Activated naive CD4-positive, alpha-beta T cell treated with anti-CD3 and anti-CD28 coated beads, Interleukin-2, amount 10 ng/mL, durations not matched to agents 7 days and 5 days (primary cell): ENCODE measurements at regions of chr1 and their contacts with region 1.

Region 1: DNA sequence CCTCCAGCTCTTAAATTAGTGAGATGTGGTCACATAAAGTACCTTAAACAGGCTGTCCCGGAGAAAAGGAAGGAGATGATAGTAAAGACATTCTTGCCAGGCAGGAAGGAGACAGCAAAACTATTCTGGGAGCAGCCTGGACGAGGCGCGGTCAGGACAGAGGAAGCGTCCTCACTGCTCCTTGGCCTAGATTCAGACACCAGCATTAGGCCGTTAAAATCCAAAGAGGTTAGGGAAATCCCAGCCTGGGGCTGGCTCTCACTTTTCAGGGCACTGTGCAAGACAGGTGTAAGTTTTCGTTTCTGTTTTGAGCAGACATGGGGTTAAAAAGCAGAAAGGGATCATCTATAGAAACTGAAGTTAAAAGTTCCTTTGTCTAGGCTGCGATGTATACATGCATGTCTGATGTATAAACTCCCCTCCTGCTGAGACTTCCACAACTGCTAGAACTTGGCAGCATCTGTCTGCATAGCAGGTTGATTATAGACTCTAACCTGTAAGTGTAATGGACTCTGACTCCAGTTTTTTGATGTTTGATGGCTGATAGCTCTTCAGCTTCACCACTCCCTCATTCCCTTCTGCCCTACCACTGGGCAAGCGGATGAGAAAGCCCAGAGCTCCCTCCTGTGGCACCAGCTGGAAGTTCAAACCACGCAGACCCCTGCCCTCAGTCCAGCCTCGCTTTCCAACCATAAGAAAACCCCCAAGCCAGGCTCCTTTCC is 21.5 kb downstream of the STPG1 start:
- DNase-seq: peak; percentile 74
- H3K4me3 Mint-ChIP-seq: peak overlapping the region; percentile 62
- H3K27ac Mint-ChIP-seq: peak overlapping the region; percentile 91
- H3K4me1 Mint-ChIP-seq: peaks cover 36% of the 10 kb centered on the region
- H3K27me3 Mint-ChIP-seq: no peaks in the 10 kb centered on the region

Region 2: GRCh38 chr1:24150234-24151174 is 241.5 kb before region 1 on chr1:
- CTCF ChIA-PET with region 1: interaction called, 79 read pairs
- DNase-seq: peak; percentile 93
- H3K4me3 Mint-ChIP-seq: peak overlapping the region; percentile 10
- H3K27ac Mint-ChIP-seq: no peak overlapping the region
- H3K4me1 Mint-ChIP-seq: peaks cover 19% of the 10 kb centered on the region
- H3K27me3 Mint-ChIP-seq: peaks cover 65% of the 10 kb centered on the region

Region 3: DNA sequence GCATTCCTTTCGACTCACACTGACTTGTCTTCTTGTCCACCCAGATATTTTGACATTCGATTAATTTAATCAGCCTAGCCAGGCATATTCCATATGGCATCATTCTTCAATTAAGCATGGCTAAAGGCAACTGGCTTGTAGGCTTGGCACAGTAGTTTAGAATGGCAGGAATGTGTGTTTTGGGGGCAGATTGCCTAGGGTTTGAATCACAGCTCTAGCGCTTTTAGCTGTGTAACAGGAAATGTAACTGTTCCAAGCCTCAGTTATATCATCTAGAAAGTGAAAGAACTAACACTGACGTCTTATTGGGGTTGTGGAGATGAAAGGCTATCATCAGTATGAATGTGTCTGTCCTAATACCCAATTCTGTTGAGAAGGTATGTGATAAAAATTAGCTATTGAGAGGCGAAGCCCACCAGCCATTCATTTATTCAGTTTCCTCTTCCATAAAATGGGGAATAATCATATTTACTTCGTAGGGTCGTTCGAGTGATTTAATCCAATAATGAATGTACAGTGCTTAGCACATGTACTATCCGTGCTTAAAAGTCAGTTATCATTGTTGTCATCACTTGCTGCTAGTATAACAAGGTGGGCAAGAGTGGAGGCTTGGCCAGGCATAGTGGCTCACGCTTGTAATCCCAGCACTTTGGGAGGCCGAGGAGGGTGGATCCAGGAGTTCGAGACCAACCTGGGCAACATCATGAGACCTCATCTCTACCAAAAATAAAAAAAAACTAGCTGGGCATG is 114.4 kb before region 1 on chr1:
- CTCF ChIA-PET with region 1: interaction called, 20 read pairs
- DNase-seq: no peak
- H3K4me3 Mint-ChIP-seq: no peak overlapping the region
- H3K27ac Mint-ChIP-seq: no peak overlapping the region
- H3K4me1 Mint-ChIP-seq: peaks cover 14% of the 10 kb centered on the region
- H3K27me3 Mint-ChIP-seq: peaks cover 46% of the 10 kb centered on the region

Region 4: GRCh38 chr1:24321697-24322469 is 70.2 kb before region 1 on chr1:
- CTCF ChIA-PET with region 1: interaction called, 16 read pairs
- DNase-seq: peak; percentile 85
- H3K4me3 Mint-ChIP-seq: peak overlapping the region; percentile 69
- H3K27ac Mint-ChIP-seq: peak overlapping the region; percentile 75
- H3K4me1 Mint-ChIP-seq: peaks cover 48% of the 10 kb centered on the region
- H3K27me3 Mint-ChIP-seq: peaks cover 100% of the 10 kb centered on the region

Region 5: GRCh38 chr1:24351918-24352627 is 40.0 kb before region 1 on chr1:
- CTCF ChIA-PET with region 1: interaction called, 16 read pairs
- DNase-seq: no peak
- H3K4me3 Mint-ChIP-seq: no peak overlapping the region
- H3K27ac Mint-ChIP-seq: no peak overlapping the region
- H3K4me1 Mint-ChIP-seq: peaks cover 26% of the 10 kb centered on the region
- H3K27me3 Mint-ChIP-seq: peaks cover 24% of the 10 kb centered on the region

Region 6: GRCh38 chr1:24459551-24460266 is 67.7 kb after region 1 on chr1:
- CTCF ChIA-PET with region 1: no interaction called
- DNase-seq: no peak
- H3K4me3 Mint-ChIP-seq: no peak overlapping the region
- H3K27ac Mint-ChIP-seq: no peak overlapping the region
- H3K4me1 Mint-ChIP-seq: peaks cover 6% of the 10 kb centered on the region
- H3K27me3 Mint-ChIP-seq: no peaks in the 10 kb centered on the region

Region 7: GRCh38 chr1:24586970-24587820 is 195.2 kb after region 1 on chr1:
- CTCF ChIA-PET with region 1: interaction called, 33 read pairs
- DNase-seq: peak; percentile 64
- H3K4me3 Mint-ChIP-seq: no peak overlapping the region
- H3K27ac Mint-ChIP-seq: no peak overlapping the region
- H3K4me1 Mint-ChIP-seq: peaks cover 9% of the 10 kb centered on the region
- H3K27me3 Mint-ChIP-seq: peaks cover 56% of the 10 kb centered on the region